ENCODE measurements at regions of chr11 and their contacts with region 1.

Region 1: DNA sequence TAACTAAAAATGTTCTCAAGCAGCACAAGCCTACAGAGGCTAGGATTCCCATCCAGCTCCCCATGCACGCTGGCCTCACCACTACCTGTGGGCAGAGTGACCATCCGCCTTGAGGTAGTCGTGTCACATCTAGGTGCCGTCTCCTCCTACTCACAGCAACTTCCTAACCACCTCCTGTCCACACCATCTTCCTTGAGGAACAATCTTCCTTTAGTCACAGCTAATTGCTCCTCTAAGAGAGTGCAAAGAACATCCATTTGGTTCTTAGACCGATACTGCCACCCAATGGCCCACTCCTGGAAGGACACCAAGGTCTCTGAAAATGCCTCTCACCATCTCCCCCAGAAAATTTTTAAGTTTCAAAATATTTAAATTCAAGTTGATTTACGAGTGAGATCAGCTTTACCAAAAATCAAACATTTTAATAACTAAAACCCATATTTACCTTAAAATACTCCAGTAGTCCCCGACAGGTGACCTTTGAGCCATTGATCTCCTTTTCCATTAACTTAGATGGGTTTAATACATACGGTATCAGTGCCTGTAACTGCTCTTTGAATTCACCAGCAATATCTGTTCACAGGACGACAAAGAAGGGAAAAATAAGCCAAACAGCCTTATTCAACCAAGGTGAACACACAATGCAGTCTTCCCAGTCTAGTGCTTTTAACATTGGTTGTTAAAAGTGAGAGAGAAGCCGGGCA is 21.7 kb upstream of the PLAAT3 start:
- DNase-seq: no peak

Region 2: DNA sequence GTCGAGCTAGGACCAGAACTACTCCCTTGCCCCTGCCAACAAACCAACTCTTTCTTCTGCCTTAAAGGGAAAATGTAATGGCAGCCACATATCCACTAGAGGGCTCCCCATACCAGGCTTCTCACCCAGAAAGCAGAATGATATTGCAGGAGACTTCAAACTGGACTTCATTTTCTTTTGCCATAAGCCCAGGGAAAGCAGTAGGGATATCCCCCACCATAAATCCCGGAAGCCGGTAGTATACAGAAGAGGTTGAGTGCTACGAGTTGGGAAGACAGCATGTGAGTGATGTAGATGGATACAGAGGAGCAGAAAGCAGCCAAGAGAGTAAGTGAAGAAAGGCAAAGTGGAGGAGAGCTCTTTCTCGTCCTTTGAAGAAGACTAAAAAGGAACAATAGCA is 157.0 kb before region 1 on chr11:
- intact Hi-C with region 1: loop called (anchors 2 kb)
- DNase-seq: no peak